Caco-2 (cell line): ENCODE measurements at regions of chr20 and their contacts with region 1.

Region 1: GRCh38 chr20:6828794-6829423 is 61.4 kb downstream of the BMP2 start:
- DNase-seq: peak; percentile 74 to 75
- H3K4me3 ChIP-seq: no peak overlapping the region
- H3K4me3 Mint-ChIP-seq: no peak overlapping the region
- H3K27ac Mint-ChIP-seq: no peak overlapping the region
- H3K4me1 ChIP-seq: no peaks in the 10 kb centered on the region
- H3K4me1 Mint-ChIP-seq: peaks cover 6% of the 10 kb centered on the region
- H3K27me3 ChIP-seq: no peaks in the 10 kb centered on the region
- H3K27me3 Mint-ChIP-seq: no peaks in the 10 kb centered on the region
- CTCF ChIP-seq: peak; percentile 81 to 84

Region 2: GRCh38 chr20:6767536-6768227 is 61.2 kb before region 1 on chr20 and contains the start of gene BMP2:
- CTCF ChIA-PET with region 1: no interaction called
- POLR2A ChIA-PET with region 1: no interaction called
- intact Hi-C with region 1: no loop called
- DNase-seq: peak; percentile 63 to 79
- H3K4me3 ChIP-seq: peak within 1 kb of the TSS; percentile 96
- H3K4me3 Mint-ChIP-seq: peak within 1 kb of the TSS; percentile 92
- H3K27ac Mint-ChIP-seq: peak within 1 kb of the TSS; percentile 53
- H3K4me1 ChIP-seq: peaks cover 21% of the 10 kb centered on the region
- H3K4me1 Mint-ChIP-seq: peaks cover 33% of the 10 kb centered on the region
- H3K27me3 ChIP-seq: no peaks in the 10 kb centered on the region
- H3K27me3 Mint-ChIP-seq: no peaks in the 10 kb centered on the region
- CTCF ChIP-seq: no peak
- total RNA-seq, gene BMP2: 24.3 and 27.3 TPM in 2 replicates

Region 3: GRCh38 chr20:6940046-6940445 is 111.1 kb after region 1 on chr20:
- CTCF ChIA-PET with region 1: no interaction called
- POLR2A ChIA-PET with region 1: no interaction called
- intact Hi-C with region 1: loop called (anchors 1 kb)
- DNase-seq: peak in 1 of 2 experiments; percentile 56
- H3K4me3 ChIP-seq: no peak overlapping the region
- H3K4me3 Mint-ChIP-seq: no peak overlapping the region
- H3K27ac Mint-ChIP-seq: no peak overlapping the region
- H3K4me1 ChIP-seq: no peaks in the 10 kb centered on the region
- H3K4me1 Mint-ChIP-seq: no peaks in the 10 kb centered on the region
- H3K27me3 ChIP-seq: peaks cover 1% of the 10 kb centered on the region; the same call in 1 of the 2 replicates
- H3K27me3 Mint-ChIP-seq: peaks cover 7% of the 10 kb centered on the region
- CTCF ChIP-seq: peak; percentile 42 to 48

Region 4: DNA sequence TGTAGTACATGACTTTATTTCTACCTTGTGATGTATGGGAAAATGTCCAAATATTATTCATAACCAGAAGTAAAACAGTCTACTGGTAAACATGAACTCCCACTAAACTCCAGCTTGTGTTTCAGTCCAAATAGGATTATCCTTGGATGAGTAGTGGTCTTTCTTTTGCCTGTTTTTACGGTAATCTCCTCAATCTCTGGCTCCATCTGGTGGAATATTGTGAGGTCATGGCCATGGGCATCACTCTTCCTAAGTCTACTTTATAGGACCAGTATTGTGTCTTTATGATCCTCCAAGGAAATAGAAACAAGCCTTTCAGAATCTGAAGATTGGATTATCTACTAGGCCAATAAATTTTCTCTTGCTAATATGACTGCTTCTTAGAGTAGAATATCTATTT is 443.6 kb after region 1 on chr20:
- CTCF ChIA-PET with region 1: no interaction called
- POLR2A ChIA-PET with region 1: no interaction called
- intact Hi-C with region 1: loop called (anchors 1 kb)
- DNase-seq: peak in 1 of 2 experiments; percentile 38
- H3K4me3 ChIP-seq: no peak overlapping the region
- H3K4me3 Mint-ChIP-seq: no peak overlapping the region
- H3K27ac Mint-ChIP-seq: no peak overlapping the region
- H3K4me1 ChIP-seq: no peaks in the 10 kb centered on the region
- H3K4me1 Mint-ChIP-seq: no peaks in the 10 kb centered on the region
- H3K27me3 ChIP-seq: no peaks in the 10 kb centered on the region
- H3K27me3 Mint-ChIP-seq: no peaks in the 10 kb centered on the region
- CTCF ChIP-seq: peak; percentile 47 to 69

Region 5: DNA sequence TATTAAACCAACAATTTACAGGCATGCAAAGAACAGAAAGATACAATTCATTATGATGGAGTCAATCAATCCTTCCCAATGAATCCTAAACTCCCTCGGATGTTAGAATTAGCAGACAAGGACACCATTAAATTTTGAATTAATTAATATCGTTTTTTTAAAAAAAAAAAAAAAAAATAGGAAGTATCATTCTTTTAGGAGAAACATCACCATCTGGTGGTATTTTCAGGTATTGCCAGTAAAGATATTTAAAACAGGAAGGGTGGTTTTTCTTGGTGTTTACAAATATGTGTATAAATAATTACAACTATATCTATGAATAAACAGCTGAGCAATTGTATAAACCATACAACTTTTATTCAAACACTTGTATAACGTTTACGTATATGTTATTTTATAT is 547.0 kb after region 1 on chr20:
- CTCF ChIA-PET with region 1: no interaction called
- POLR2A ChIA-PET with region 1: no interaction called
- intact Hi-C with region 1: loop called (anchors 5 kb)
- DNase-seq: peak in 1 of 2 experiments; percentile 43
- H3K4me3 ChIP-seq: no peak overlapping the region
- H3K4me3 Mint-ChIP-seq: no peak overlapping the region
- H3K27ac Mint-ChIP-seq: no peak overlapping the region
- H3K4me1 ChIP-seq: no peaks in the 10 kb centered on the region
- H3K4me1 Mint-ChIP-seq: no peaks in the 10 kb centered on the region
- H3K27me3 ChIP-seq: no peaks in the 10 kb centered on the region
- H3K27me3 Mint-ChIP-seq: peaks cover 3% of the 10 kb centered on the region
- CTCF ChIP-seq: peak; percentile 55 to 62